Lower leg skin (tissue), 4 donors: ENCODE measurements at regions of chr10 and their contacts with region 1.

Region 1: GRCh38 chr10:78081292-78081691 is 47.6 kb downstream of the RPS24 start:
- DNase-seq: peak in 1 of 2 donors; percentile 74
- H3K4me3 ChIP-seq: no peak overlapping the region
- CTCF ChIP-seq: no peak
- POLR2A ChIP-seq: no peak

Region 2: GRCh38 chr10:77741746-77742145 is 339.5 kb before region 1 on chr10:
- intact Hi-C with region 1: loop called (anchors 5 kb)
- DNase-seq: no peak
- H3K4me3 ChIP-seq: no peak overlapping the region
- CTCF ChIP-seq: no peak
- POLR2A ChIP-seq: no peak

Region 3: GRCh38 chr10:78062296-78062695 is 19.0 kb before region 1 on chr10:
- intact Hi-C with region 1: no loop called
- DNase-seq: no peak
- H3K4me3 ChIP-seq: no peak overlapping the region
- CTCF ChIP-seq: no peak
- POLR2A ChIP-seq: no peak

Region 4: GRCh38 chr10:78116361-78116760 is 35.1 kb after region 1 on chr10:
- intact Hi-C with region 1: no loop called
- DNase-seq: no peak
- H3K4me3 ChIP-seq: no peak overlapping the region
- CTCF ChIP-seq: no peak
- POLR2A ChIP-seq: no peak

Region 5: GRCh38 chr10:78248651-78249464 is 167.6 kb after region 1 on chr10:
- intact Hi-C with region 1: no loop called
- DNase-seq: peak in 1 of 2 donors; percentile 28
- H3K4me3 ChIP-seq: no peak overlapping the region
- CTCF ChIP-seq: no peak
- POLR2A ChIP-seq: no peak